Activated CD4-positive, alpha-beta T cell treated with anti-CD3 and anti-CD28 coated beads, Interleukin-2, amount 10 ng/mL, durations not matched to agents 24 days and 14 days (primary cell): ENCODE measurements at regions of chr2 and their contacts with region 1.

Region 1: DNA sequence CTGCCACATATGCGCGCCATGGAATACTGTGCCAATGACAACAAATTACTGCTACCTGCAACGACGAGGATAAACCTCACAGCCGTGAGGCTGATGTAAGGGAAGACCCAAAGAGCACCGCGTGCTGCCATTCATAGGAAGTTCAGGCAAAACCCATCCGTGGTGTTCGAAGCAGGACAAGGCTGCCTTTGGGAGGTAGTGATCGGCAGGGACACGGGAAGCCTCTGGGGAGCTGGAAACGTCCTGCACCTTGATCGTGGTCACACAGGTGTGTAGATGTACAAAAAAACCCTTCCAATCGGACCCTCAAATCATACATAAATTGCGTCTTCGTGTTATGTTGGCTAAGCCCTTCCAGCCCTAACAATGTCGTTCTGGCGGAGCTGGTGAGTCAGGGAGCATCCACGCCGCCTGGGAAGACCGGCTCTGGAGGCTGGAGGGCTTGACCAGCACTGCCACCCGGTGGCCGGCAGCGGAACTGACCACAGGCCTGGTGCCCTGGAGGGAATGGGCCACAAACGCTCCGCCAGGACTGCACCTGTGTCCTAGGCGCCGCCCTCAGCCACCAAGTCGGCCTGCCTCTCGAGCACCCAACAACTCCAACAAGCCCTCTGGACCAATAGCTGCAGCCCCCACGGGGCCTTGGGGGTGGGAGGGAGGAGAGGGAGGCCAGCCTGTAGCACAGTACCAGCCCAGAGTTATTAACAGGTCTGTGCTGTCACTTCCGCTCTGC is 4.1 kb upstream of the NEURL3 start:
- DNase-seq: peak; percentile 91
- H3K4me3 Mint-ChIP-seq: peak overlapping the region; percentile 28
- H3K27ac Mint-ChIP-seq: no peak overlapping the region
- H3K4me1 Mint-ChIP-seq: peaks cover 37% of the 10 kb centered on the region
- H3K27me3 Mint-ChIP-seq: no peaks in the 10 kb centered on the region

Region 2: DNA sequence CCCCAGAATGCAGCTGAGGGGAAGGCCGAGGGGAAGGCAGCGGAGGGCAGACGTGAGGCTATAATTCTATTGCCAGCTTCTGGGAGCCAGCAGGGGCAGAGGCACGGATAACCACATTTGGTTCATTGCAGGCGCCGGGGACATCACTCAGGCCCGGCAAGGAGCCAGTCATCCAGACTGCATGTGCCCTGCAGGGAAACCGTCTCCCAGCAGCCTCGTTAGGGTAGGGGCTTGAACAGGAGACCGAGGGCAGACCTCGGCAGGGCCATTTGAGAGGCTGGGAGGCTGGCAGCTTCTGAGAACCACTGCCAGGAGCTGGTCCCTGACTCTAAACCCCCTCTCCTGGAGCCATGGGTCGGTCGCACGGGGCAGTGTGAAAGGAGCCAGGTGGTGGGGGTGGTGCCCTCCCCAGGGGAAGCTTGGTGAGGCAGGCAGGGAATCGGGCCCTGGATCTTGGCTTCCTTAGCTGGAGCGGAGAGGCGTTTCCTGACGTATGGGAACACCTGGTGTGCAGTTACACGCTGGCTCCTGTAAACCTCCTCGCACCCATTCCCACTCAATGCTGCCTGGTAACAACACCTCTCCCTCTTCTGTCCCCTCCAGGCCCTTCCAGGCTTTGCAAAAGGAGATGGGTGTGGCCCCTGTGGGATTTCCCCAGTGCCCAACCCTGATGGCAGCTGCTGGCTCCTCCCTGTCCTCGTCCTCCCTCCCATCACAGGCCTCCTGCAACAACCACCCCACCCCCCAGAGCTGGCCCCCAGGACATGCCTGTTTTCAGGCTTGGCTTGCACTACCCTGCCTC is 417.5 kb before region 1 on chr2:
- intact Hi-C with region 1: no loop called
- DNase-seq: no peak
- H3K4me3 Mint-ChIP-seq: no peak overlapping the region
- H3K27ac Mint-ChIP-seq: no peak overlapping the region
- H3K4me1 Mint-ChIP-seq: peaks cover 3% of the 10 kb centered on the region
- H3K27me3 Mint-ChIP-seq: peaks cover 15% of the 10 kb centered on the region

Region 3: DNA sequence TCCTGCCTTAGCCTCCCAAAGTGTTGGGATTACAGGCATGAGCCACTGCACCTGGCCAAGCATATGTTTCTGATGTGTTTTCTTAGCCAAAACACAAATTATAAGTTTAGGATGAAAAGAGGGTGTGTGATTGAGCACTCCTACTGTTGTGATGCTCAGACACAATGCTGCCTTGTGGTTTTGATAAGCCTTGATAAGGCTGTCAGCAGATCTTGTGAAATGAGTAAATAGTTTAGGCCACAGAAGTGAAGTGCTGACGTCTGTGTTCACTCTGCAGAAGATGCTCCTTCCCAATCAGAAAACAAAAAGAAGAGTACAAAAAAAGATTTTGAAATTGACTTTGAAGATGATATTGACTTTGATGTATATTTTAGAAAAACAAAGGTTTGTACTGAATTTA is 149.4 kb before region 1 on chr2:
- intact Hi-C with region 1: loop called (anchors 5 kb)
- DNase-seq: no peak
- H3K4me3 Mint-ChIP-seq: no peak overlapping the region
- H3K27ac Mint-ChIP-seq: peak overlapping the region; percentile 74
- H3K4me1 Mint-ChIP-seq: peaks cover 8% of the 10 kb centered on the region
- H3K27me3 Mint-ChIP-seq: no peaks in the 10 kb centered on the region

Region 4: GRCh38 chr2:96437512-96437911 is 71.8 kb before region 1 on chr2:
- intact Hi-C with region 1: no loop called
- DNase-seq: no peak
- H3K4me3 Mint-ChIP-seq: no peak overlapping the region
- H3K27ac Mint-ChIP-seq: no peak overlapping the region
- H3K4me1 Mint-ChIP-seq: no peaks in the 10 kb centered on the region
- H3K27me3 Mint-ChIP-seq: peaks cover 5% of the 10 kb centered on the region

Region 5: DNA sequence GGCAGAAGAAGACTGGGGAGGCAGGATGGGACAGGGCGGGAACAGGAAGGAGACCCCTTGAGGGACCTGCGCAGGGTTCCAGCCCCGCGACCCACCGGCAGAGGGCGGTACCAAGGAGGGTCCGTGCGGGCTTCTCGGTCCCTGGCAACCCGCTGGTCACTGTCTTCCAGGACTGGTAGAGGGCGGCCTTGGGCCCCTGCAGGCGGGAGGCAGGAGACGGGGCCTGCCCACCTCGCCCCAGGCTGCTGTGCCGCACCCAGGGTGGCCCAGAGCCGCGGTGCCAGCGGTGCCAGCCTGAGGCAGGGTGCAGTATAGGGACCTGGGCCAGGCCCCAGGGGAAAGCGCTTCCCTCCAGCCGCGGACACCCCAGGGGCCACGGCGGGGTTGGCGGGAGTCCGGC is 38.6 kb before region 1 on chr2:
- intact Hi-C with region 1: loop called (anchors 2 kb)
- DNase-seq: peak; percentile 87
- H3K4me3 Mint-ChIP-seq: no peak overlapping the region
- H3K27ac Mint-ChIP-seq: no peak overlapping the region
- H3K4me1 Mint-ChIP-seq: peaks cover 6% of the 10 kb centered on the region
- H3K27me3 Mint-ChIP-seq: peaks cover 13% of the 10 kb centered on the region

Region 6: DNA sequence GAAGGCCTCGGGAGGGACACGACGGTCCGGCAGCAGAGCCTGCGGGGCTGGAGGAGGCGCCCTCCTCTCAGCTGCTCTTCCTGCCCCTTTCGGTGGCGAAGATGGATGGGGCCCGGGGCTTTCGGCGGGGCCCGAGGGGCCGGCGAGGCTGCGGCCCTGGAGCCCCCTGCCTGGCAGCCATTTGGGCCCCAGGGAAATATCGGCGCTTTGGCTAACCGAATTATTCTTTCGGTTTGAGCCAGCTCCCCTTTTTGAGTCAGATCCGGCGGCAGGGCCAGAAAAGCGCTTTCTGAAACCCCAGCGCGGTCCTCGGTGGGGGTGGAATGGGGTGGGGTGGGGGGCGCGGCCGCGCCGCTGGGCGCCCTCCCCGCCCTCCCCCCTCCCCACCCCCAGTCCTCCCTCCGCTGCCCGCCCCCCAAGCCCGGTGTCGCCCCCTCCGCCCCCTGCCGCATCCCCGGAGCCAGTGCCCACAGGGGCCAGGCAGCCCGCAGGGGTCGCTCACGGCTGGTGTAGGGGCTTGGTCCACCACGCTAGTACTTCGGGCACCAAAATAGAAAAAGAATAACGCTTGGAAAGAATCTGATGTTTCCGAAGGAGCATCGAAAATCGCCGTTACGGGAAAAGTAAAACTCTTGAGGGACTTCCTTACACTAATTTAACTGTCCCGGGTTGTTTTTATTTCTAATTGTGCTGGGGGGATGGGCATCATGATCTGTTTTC is 18.2 kb after region 1 on chr2:
- intact Hi-C with region 1: loop called (anchors 2 kb)
- DNase-seq: peak; percentile 91
- H3K4me3 Mint-ChIP-seq: peak overlapping the region; percentile 81
- H3K27ac Mint-ChIP-seq: peak overlapping the region; percentile 94
- H3K4me1 Mint-ChIP-seq: peaks cover 86% of the 10 kb centered on the region
- H3K27me3 Mint-ChIP-seq: no peaks in the 10 kb centered on the region